Caco-2 (cell line): ENCODE measurements at regions of chr10 and their contacts with region 1.

Region 1: DNA sequence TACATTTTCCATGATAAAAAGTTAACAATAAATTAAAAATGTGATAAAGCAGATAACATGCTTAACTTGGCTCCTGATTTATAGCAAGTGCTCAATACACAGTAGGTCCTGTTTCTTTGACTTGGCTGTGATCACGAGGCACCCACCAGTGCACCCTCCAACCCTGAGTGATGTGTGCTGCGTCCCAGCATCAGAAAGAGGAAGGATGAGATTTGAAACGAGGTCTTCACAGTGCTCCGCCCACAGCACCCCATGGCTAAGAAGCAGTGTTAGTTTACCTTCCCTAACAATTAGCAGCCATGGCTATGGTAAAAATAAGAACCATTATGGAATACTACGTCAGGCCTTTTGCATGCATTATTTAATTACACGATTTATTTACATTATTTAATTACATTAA is 292.0 kb upstream of the ZMIZ1 start:
- DNase-seq: no peak
- H3K4me3 ChIP-seq: no peak overlapping the region
- H3K4me3 Mint-ChIP-seq: no peak overlapping the region
- H3K27ac Mint-ChIP-seq: no peak overlapping the region
- H3K4me1 ChIP-seq: peaks cover 17% of the 10 kb centered on the region
- H3K4me1 Mint-ChIP-seq: peaks cover 7% of the 10 kb centered on the region
- H3K27me3 ChIP-seq: no peaks in the 10 kb centered on the region
- H3K27me3 Mint-ChIP-seq: no peaks in the 10 kb centered on the region
- CTCF ChIP-seq: no peak

Region 2: DNA sequence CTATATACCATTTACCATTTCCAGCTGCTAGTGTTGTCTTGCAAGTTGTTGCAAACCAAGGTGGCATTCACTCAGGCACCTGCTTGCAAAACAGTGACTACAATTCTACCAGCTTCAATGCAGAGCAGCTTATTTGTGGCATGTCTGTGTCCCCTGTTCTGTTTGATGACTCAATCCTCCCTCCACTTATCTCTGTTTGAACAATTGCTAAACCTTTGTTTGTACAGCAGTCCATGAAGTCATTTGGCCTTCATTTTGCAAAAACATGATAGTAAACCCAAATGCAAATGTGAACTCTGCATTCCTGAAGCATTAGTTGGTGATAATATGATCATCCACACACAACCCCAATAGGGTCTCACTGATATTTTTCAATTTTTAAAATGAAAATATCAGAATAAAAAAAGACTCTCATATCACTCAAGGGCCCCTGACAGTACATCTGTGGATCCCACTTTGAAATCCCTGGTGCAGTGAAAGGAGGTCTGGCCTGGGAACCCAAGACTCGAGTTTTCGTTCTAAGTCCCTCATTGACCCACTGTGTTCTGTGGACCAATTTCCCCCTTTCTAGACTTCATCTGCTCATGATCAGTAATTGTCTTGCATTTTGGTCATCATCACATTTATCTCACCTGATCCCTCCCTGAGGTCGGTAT is 317.6 kb before region 1 on chr10:
- CTCF ChIA-PET with region 1: no interaction called
- POLR2A ChIA-PET with region 1: no interaction called
- intact Hi-C with region 1: loop called (anchors 1 kb)
- DNase-seq: peak; percentile 75 to 81
- H3K4me3 ChIP-seq: no peak overlapping the region
- H3K4me3 Mint-ChIP-seq: peak overlapping the region; percentile 37
- H3K27ac Mint-ChIP-seq: peak overlapping the region; percentile 61
- H3K4me1 ChIP-seq: peaks cover 43% of the 10 kb centered on the region
- H3K4me1 Mint-ChIP-seq: peaks cover 31% of the 10 kb centered on the region
- H3K27me3 ChIP-seq: no peaks in the 10 kb centered on the region
- H3K27me3 Mint-ChIP-seq: no peaks in the 10 kb centered on the region
- CTCF ChIP-seq: no peak

Region 3: GRCh38 chr10:78717200-78717599 is 59.6 kb before region 1 on chr10:
- CTCF ChIA-PET with region 1: no interaction called
- POLR2A ChIA-PET with region 1: no interaction called
- intact Hi-C with region 1: no loop called
- DNase-seq: no peak
- H3K4me3 ChIP-seq: no peak overlapping the region
- H3K4me3 Mint-ChIP-seq: no peak overlapping the region
- H3K27ac Mint-ChIP-seq: no peak overlapping the region
- H3K4me1 ChIP-seq: no peaks in the 10 kb centered on the region
- H3K4me1 Mint-ChIP-seq: no peaks in the 10 kb centered on the region
- H3K27me3 ChIP-seq: no peaks in the 10 kb centered on the region
- H3K27me3 Mint-ChIP-seq: no peaks in the 10 kb centered on the region
- CTCF ChIP-seq: no peak